ENCODE measurements at regions of chr16 and their contacts with region 1.

Region 1: DNA sequence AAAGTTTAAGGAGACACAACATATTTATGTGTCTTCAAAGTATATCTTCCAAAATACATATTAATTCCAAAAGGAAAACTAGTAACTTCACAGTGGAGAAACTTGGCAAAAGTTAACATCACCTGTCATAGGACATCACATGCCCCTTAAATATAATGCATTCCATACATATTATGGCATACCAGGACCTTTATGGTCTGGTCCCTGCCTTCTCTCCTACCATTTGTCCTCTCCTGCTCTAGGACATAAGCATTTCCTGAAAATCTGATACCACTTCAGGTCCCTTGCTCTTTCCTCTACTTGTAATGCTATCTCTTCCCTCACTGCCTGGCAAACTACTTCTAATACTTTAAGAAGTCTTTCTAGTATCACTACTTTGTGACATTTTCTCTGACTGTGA is 168.1 kb upstream of the RBL2 start:
- DNase-seq: no peak
- H3K4me3 ChIP-seq: no peak overlapping the region
- H3K27ac ChIP-seq: no peak overlapping the region
- H3K4me1 ChIP-seq: no peaks in the 10 kb centered on the region
- H3K27me3 ChIP-seq: no peaks in the 10 kb centered on the region
- CTCF ChIP-seq: no peak
- POLR2A ChIP-seq: no peak

Region 2: GRCh38 chr16:53159781-53160436 is 106.2 kb before region 1 on chr16:
- CTCF ChIA-PET with region 1: no interaction called
- POLR2A ChIA-PET with region 1: no interaction called
- dilution Hi-C with region 1: no loop called
- intact Hi-C with region 1: no loop called
- DNase-seq: peak; percentile 70
- H3K4me3 ChIP-seq: no peak overlapping the region
- H3K27ac ChIP-seq: no peak overlapping the region
- H3K4me1 ChIP-seq: no peaks in the 10 kb centered on the region
- H3K27me3 ChIP-seq: no peaks in the 10 kb centered on the region
- CTCF ChIP-seq: peak; percentile 54 to 66
- POLR2A ChIP-seq: no peak

Region 3: GRCh38 chr16:53232826-53233529 is 33.2 kb before region 1 on chr16:
- CTCF ChIA-PET with region 1: no interaction called
- POLR2A ChIA-PET with region 1: no interaction called
- dilution Hi-C with region 1: no loop called
- intact Hi-C with region 1: loop called (anchors 5 kb)
- DNase-seq: no peak
- H3K4me3 ChIP-seq: no peak overlapping the region
- H3K27ac ChIP-seq: no peak overlapping the region
- H3K4me1 ChIP-seq: no peaks in the 10 kb centered on the region
- H3K27me3 ChIP-seq: no peaks in the 10 kb centered on the region
- CTCF ChIP-seq: no peak
- POLR2A ChIP-seq: no peak